PC-9 (cell line): ENCODE measurements at regions of chr7 and their contacts with region 1.

Region 1: DNA sequence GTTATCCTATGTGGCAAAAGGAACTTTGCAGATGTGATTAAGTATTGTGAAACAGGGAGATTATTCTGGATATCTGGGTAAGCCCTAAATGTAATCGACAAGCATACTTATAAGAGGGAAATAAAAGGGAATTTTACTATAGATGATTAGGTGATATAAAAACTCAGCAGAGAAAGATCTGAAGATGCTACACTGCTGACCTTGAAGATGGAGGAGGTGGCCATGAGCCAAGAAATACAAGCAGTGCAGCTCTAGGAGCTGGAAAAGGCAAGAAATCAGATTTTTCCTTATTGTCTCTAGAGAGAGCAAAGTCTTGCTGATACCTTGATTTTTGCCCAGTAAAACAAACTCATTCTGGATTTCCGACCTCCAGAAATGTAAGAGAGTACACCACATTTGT is 67.7 kb downstream of the BRAF start:
- DNase-seq: no peak
- H3K4me3 ChIP-seq: no peak overlapping the region
- H3K27ac ChIP-seq: no peak overlapping the region
- H3K4me1 ChIP-seq: no peaks in the 10 kb centered on the region
- H3K27me3 ChIP-seq: no peaks in the 10 kb centered on the region
- CTCF ChIP-seq: no peak

Region 2: GRCh38 chr7:141001122-141001521 is 144.1 kb after region 1 on chr7:
- CTCF ChIA-PET with region 1: no interaction called
- POLR2A ChIA-PET with region 1: interaction called, 11 read pairs
- intact Hi-C with region 1: no loop called
- DNase-seq: no peak
- H3K4me3 ChIP-seq: no peak overlapping the region
- H3K27ac ChIP-seq: no peak overlapping the region
- H3K4me1 ChIP-seq: no peaks in the 10 kb centered on the region
- H3K27me3 ChIP-seq: no peaks in the 10 kb centered on the region
- CTCF ChIP-seq: no peak